ENCODE measurements at regions of chr2 and their contacts with region 1.

Region 1: DNA sequence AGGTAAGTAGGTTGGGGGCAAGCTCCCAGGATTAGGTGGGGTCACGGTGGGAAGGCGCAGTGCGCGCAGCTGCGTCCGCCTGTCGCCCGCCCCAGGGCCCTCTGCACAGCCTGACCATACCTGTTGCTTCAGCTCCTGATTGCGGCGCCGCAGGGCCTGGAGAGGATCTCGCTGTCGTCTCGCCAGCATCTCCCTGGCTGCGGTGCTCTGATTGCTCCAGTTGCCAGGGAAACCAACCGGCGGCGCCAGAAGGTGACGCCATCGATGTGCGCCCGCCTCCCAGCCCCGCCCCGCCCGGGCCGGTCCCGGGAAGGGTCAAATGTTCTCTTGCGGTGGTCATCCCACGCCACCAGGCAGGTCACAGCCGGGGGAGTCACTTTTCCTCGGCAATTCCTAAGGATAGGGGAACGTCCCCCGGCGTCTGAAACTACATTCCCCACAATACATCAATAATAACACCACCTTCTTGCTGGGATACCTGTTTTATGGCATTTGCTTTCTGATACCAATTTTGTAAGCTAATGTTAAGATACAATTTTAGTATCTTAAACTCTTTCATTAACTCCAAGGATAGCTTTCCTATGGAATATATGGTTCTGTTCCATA is at the start of gene NPHP1:
- DNase-seq: peak; percentile 78
- H3K4me3 Mint-ChIP-seq: peak within 1 kb of the TSS; percentile 99
- H3K27ac Mint-ChIP-seq: peak within 1 kb of the TSS; percentile 98
- H3K4me1 Mint-ChIP-seq: peaks cover 19% of the 10 kb centered on the region
- H3K27me3 Mint-ChIP-seq: no peaks in the 10 kb centered on the region
- CTCF ChIP-seq: no peak
- total RNA-seq, gene NPHP1: 3.1 and 5.9 TPM in 2 replicates

Region 2: DNA sequence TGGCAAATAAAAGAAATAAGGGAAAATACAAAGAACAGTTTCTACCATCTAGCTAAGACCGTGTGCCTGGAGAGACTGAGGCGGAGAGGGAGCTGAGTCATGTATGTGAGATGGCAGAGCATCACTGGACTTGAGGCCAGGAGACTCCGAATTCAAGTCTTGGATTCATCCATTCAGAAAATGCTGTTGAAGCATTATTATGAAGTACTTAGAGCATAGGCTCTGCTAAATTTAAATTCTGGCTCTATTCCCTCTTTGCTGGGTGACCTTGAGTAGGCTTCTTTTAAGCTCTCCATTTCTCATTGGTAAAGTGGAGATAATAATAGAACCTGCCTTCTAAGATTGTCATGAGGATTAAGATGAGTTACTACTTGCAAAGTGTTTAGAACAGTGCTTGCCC is 34.8 kb before region 1 on chr2:
- CTCF ChIA-PET with region 1: no interaction called
- POLR2A ChIA-PET with region 1: interaction called, 12 read pairs
- intact Hi-C with region 1: no loop called
- DNase-seq: no peak
- H3K4me3 Mint-ChIP-seq: no peak overlapping the region
- H3K27ac Mint-ChIP-seq: no peak overlapping the region
- H3K4me1 Mint-ChIP-seq: peaks cover 7% of the 10 kb centered on the region
- H3K27me3 Mint-ChIP-seq: no peaks in the 10 kb centered on the region
- CTCF ChIP-seq: no peak

Measured in MCF 10A (cell line).